CD4-positive, alpha-beta T cell (primary cell): ENCODE measurements at regions of chr1 and their contacts with region 1.

Region 1: GRCh38 chr1:179190861-179191260 is 38.6 kb downstream of the ABL2 start:
- DNase-seq: peak in 3 of 14 experiments; percentile 13 to 39 (median 39)
- ATAC-seq: no peak
- H3K4me3 ChIP-seq: no peak overlapping the region
- H3K4me3 Mint-ChIP-seq: no peak overlapping the region
- H3K27ac ChIP-seq: no peak overlapping the region
- H3K27ac Mint-ChIP-seq: no peak overlapping the region
- H3K4me1 ChIP-seq: peaks cover 3% of the 10 kb centered on the region
- H3K4me1 Mint-ChIP-seq: peaks cover 30% of the 10 kb centered on the region
- H3K27me3 ChIP-seq: no peaks in the 10 kb centered on the region
- H3K27me3 Mint-ChIP-seq: no peaks in the 10 kb centered on the region
- CTCF ChIP-seq: no peak

Region 2: DNA sequence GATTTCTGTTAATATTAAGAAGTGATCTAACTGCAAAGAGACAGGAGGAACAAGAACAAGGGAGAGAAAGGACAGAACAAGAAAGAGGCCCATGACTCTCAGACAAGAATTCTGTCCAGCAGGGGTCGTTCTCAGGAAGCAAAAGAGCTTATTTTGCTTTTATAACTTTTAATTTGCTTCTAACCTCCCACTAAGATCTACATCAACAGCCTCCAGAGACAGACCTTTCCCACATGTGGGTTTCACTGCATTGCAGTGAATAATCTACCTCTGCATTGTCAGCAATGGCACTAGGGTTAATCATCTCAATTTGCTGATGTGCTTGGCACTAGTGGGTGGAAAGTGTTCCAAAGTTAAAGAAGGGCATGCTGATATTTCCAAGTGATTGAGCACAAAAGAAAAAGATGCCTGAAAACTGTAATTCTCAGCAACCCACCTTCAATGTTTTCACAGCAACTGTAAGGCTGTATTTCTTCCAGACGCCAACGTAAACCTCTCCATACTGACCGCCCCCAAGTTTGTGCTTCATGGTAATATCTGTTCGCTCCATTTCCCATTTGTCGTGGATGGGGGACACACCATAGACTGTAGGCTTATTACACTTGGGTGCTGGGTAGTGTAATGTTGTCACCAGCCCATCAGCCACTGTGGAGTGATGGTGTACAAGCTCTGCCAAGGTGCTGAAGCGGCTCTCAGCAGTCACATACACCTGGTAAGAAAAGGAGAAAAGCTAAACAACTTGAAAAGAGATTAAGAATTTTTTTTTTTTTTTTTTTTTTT is 69.5 kb before region 1 on chr1:
- CTCF ChIA-PET with region 1: no interaction called
- POLR2A ChIA-PET with region 1: no interaction called
- intact Hi-C with region 1: loop called (anchors 1 to 2 kb)
- DNase-seq: peak in 11 of 14 experiments; percentile 18 to 69 (median 32)
- ATAC-seq: peak; percentile 64
- H3K4me3 ChIP-seq: no peak overlapping the region
- H3K4me3 Mint-ChIP-seq: no peak overlapping the region
- H3K27ac ChIP-seq: no peak overlapping the region
- H3K27ac Mint-ChIP-seq: no peak overlapping the region
- H3K4me1 ChIP-seq: no peaks in the 10 kb centered on the region
- H3K4me1 Mint-ChIP-seq: peaks cover 5% of the 10 kb centered on the region
- H3K27me3 ChIP-seq: no peaks in the 10 kb centered on the region
- H3K27me3 Mint-ChIP-seq: no peaks in the 10 kb centered on the region
- CTCF ChIP-seq: peak; percentile 61